Heart right ventricle (tissue), 16 donors: ENCODE measurements at regions of chrX and their contacts with region 1.

Region 1: DNA sequence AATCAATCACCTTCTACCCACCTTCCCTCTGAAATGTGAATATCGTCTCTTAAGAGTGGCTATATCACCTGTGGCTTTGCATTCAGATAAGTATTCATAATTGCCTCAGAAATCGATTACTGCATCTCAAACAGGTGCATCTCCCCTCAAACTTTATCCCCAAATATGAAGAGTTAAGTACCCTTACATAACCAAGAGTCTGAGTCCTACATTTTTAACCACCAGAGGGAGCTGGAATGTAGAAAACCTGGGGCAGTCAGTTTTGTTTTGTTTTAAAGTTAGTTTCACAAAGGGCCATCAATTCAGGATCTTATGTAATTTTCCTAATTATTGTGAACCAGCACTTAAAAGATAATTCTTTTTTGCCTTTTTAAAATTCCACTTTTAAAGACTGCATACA is 5.7 kb downstream of the TCEANC start:
- DNase-seq: peak in 1 of 2 donors; percentile 11
- ATAC-seq: peak in 2 of 8 donors; percentile 53 to 67
- H3K4me3 ChIP-seq: no peak overlapping the region
- H3K27ac ChIP-seq: peak overlapping the region in 8 of 10 donors; percentile 9 to 69 (median 40)
- H3K4me1 ChIP-seq: peaks cover 0 to 23% (median 8%) of the 10 kb centered on the region in 9 donors
- H3K27me3 ChIP-seq: peaks cover 0 to 4% (median 0%) of the 10 kb centered on the region in 7 donors
- CTCF ChIP-seq: peak; percentile 37 to 71 (median 69)

Region 2: GRCh38 chrX:13742397-13743176 is 84.0 kb after region 1 on chrX:
- intact Hi-C with region 1: loop called in 9 of 10 experiments (anchors 2 to 10 kb)
- DNase-seq: no peak
- ATAC-seq: no peak
- H3K4me3 ChIP-seq: no peak overlapping the region
- H3K27ac ChIP-seq: peak overlapping the region in 1 of 10 donors; percentile 61
- H3K4me1 ChIP-seq: no peaks in the 10 kb centered on the region
- H3K27me3 ChIP-seq: peaks cover 0 to 3% (median 0%) of the 10 kb centered on the region in 7 donors
- CTCF ChIP-seq: no peak